Activated naive CD4-positive, alpha-beta T cell treated with anti-CD3 and anti-CD28 coated beads for 36 hours (primary cell): ENCODE measurements at regions of chr1 and their contacts with region 1.

Region 1: GRCh38 chr1:67118191-67118590 is 16.6 kb downstream of the C1orf141 start:
- DNase-seq: no peak
- H3K4me3 Mint-ChIP-seq: no peak overlapping the region
- H3K27ac Mint-ChIP-seq: no peak overlapping the region
- H3K4me1 Mint-ChIP-seq: peaks cover 11% of the 10 kb centered on the region
- H3K27me3 Mint-ChIP-seq: no peaks in the 10 kb centered on the region

Region 2: DNA sequence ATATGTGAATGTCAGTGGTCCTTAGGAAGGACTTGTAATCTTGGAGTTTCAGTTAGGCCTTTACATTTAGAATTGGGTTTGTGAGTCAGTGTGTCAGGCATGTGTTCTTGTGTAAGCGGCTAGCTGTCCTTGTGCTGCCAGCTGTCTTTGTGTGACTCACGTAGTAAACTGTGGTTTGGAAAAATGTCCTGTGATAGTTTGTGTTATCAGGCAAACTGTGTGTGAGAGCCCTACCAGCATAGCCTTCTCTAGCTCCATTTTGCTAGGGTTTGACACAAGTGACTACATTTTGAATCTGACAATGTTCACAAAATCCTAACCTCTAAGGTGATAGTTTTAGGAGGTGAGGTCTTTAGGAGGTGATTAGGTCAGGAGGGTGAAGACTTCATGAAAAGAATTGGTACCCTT is 57.4 kb before region 1 on chr1:
- CTCF ChIA-PET with region 1: no interaction called
- intact Hi-C with region 1: loop called (anchors 5 kb)
- DNase-seq: no peak
- H3K4me3 Mint-ChIP-seq: no peak overlapping the region
- H3K27ac Mint-ChIP-seq: no peak overlapping the region
- H3K4me1 Mint-ChIP-seq: no peaks in the 10 kb centered on the region
- H3K27me3 Mint-ChIP-seq: peaks cover 1% of the 10 kb centered on the region